HepG2 (cell line): ENCODE measurements at regions of chr1 and their contacts with region 1.

Region 1: DNA sequence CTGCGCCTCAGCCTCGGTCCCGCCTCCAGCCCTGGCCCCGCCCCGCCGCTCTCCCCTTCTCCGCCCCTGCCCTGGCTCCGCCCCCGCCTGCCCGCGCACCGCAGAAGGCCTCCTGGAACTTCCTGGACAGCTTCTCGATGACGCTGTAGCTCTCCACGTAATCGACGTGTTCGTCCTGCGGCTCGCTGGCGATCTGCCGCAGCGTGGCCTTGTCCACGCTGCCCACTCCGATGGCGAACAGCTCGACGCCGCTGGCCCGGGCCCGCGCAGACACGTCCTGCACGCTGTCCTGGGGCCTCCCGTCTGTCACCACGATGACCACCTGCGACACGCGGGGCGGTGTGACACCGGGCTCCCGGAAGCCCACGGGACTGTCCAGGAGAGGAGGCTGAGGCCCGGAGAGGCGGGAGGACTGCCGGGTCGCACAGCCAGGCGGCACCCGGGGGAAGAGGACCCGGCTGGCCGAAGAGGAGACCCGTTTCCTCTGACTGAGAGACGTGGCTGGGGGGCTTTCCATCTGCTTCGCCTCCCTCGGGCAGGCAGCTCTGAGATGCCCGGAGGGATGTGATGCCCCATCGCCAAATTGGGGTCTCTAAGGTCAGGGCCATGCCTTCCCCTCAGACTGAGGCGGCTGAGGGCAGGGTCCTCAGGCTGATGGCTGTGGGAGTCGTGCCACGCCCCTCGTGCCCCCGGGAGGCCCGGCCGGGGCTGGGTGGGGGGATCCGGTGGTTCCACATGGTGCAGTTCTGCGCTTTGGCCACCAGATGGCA is 4.6 kb downstream of the MATN1 start:
- DNase-seq: peak; percentile 84
- ATAC-seq: peak; percentile 79
- H3K4me3 ChIP-seq: peak overlapping the region; percentile 23 to 74 (median 55); a peak in 5 of 6 replicates
- H3K27ac ChIP-seq: peak overlapping the region; percentile 60
- H3K4me1 ChIP-seq: peaks cover 11% of the 10 kb centered on the region
- H3K27me3 ChIP-seq: no peaks in the 10 kb centered on the region
- CTCF ChIP-seq: peak; percentile 98
- EP300 ChIP-seq: no peak
- POLR2A ChIP-seq: peak; percentile 45 to 75; a peak in 2 of 4 replicates
- RAD21 ChIP-seq: peak; percentile 98

Region 2: GRCh38 chr1:29245876-29246275 is 1472.9 kb before region 1 on chr1:
- CTCF ChIA-PET with region 1: no interaction called
- POLR2A ChIA-PET with region 1: no interaction called
- in situ Hi-C with region 1: loop called (anchors 10 kb)
- intact Hi-C with region 1: no loop called
- DNase-seq: peak; percentile 51
- ATAC-seq: peak; percentile 71
- H3K4me3 ChIP-seq: no peak overlapping the region
- H3K27ac ChIP-seq: no peak overlapping the region
- H3K4me1 ChIP-seq: peaks cover 43% of the 10 kb centered on the region
- H3K27me3 ChIP-seq: no peaks in the 10 kb centered on the region
- CTCF ChIP-seq: peak; percentile 56
- EP300 ChIP-seq: peak; percentile 36 to 96; a peak in 3 of 4 replicates
- POLR2A ChIP-seq: no peak
- RAD21 ChIP-seq: no peak

Region 3: GRCh38 chr1:30697571-30698376 is 21.0 kb before region 1 on chr1:
- CTCF ChIA-PET with region 1: no interaction called
- POLR2A ChIA-PET with region 1: no interaction called
- in situ Hi-C with region 1: no loop called
- intact Hi-C with region 1: no loop called
- DNase-seq: no peak
- ATAC-seq: no peak
- H3K4me3 ChIP-seq: no peak overlapping the region
- H3K27ac ChIP-seq: no peak overlapping the region
- H3K4me1 ChIP-seq: no peaks in the 10 kb centered on the region
- H3K27me3 ChIP-seq: peaks cover 2 to 10% of the 10 kb centered on the region in 2 experiments; a peak in 2 of 5 replicates
- CTCF ChIP-seq: 0 out of 2 replicates have a peak, but pooled peaks have one; percentile 7
- EP300 ChIP-seq: no peak
- POLR2A ChIP-seq: no peak
- RAD21 ChIP-seq: no peak

Region 4: GRCh38 chr1:30911046-30911954 is 192.5 kb after region 1 on chr1:
- CTCF ChIA-PET with region 1: interaction called, 7 read pairs
- POLR2A ChIA-PET with region 1: no interaction called
- in situ Hi-C with region 1: loop called (anchors 5 kb)
- intact Hi-C with region 1: loop called (anchors 2 kb)
- DNase-seq: peak; percentile 54
- ATAC-seq: peak; percentile 70
- H3K4me3 ChIP-seq: no peak overlapping the region
- H3K27ac ChIP-seq: no peak overlapping the region
- H3K4me1 ChIP-seq: peaks cover 26% of the 10 kb centered on the region
- H3K27me3 ChIP-seq: peaks cover 6 to 36% of the 10 kb centered on the region in 2 experiments
- CTCF ChIP-seq: peak; percentile 91
- EP300 ChIP-seq: no peak
- POLR2A ChIP-seq: no peak
- RAD21 ChIP-seq: peak; percentile 93